ENCODE measurements at regions of chr14 and their contacts with region 1.

Region 1: GRCh38 chr14:32826404-32827082 is 112.1 kb upstream of the NPAS3 start:
- DNase-seq: no peak
- ATAC-seq: peak; percentile 56
- H3K4me3 ChIP-seq: peak overlapping the region in 1 of 2 donors; percentile 18
- H3K27ac ChIP-seq: peak overlapping the region in 1 of 2 donors; percentile 44
- H3K4me1 ChIP-seq: peaks cover 7% of the 10 kb centered on the region in 2 donors
- H3K27me3 ChIP-seq: no peaks in the 10 kb centered on the region

Region 2: DNA sequence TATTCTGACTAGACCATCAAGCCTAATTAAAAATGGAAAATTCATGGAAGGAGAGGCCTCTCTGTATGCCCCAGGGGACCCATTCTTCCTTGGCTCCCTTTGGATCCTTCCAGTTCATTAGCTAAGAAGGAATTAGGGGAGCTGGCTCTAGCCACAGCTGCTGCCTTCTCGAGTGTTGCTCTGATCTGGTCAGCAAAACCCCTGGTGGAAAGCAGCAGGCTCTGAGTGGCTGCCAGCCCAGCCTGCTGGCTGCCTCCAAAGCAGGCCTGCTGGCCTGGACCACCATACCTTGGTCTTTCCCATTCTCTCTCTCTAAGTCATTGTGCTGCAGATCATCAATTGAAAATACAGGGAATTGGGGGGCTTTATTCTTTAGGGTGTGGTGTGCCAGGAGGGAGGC is 526.4 kb before region 1 on chr14:
- intact Hi-C with region 1: no loop called
- DNase-seq: no peak
- ATAC-seq: no peak
- H3K4me3 ChIP-seq: no peak overlapping the region
- H3K27ac ChIP-seq: no peak overlapping the region
- H3K4me1 ChIP-seq: no peaks in the 10 kb centered on the region
- H3K27me3 ChIP-seq: no peaks in the 10 kb centered on the region

Region 3: GRCh38 chr14:32724867-32725471 is 101.6 kb before region 1 on chr14:
- intact Hi-C with region 1: loop called in 1 of 2 experiments (anchors 10 kb)
- DNase-seq: peak in 1 of 2 donors; percentile 25
- ATAC-seq: peak; percentile 44
- H3K4me3 ChIP-seq: peak overlapping the region; percentile 14 to 69
- H3K27ac ChIP-seq: no peak overlapping the region
- H3K4me1 ChIP-seq: peaks cover 1 to 2% of the 10 kb centered on the region in 2 donors
- H3K27me3 ChIP-seq: no peaks in the 10 kb centered on the region

Measured in aorta (tissue), 5 donors.